ENCODE measurements at regions of chr15 and their contacts with region 1.

Region 1: DNA sequence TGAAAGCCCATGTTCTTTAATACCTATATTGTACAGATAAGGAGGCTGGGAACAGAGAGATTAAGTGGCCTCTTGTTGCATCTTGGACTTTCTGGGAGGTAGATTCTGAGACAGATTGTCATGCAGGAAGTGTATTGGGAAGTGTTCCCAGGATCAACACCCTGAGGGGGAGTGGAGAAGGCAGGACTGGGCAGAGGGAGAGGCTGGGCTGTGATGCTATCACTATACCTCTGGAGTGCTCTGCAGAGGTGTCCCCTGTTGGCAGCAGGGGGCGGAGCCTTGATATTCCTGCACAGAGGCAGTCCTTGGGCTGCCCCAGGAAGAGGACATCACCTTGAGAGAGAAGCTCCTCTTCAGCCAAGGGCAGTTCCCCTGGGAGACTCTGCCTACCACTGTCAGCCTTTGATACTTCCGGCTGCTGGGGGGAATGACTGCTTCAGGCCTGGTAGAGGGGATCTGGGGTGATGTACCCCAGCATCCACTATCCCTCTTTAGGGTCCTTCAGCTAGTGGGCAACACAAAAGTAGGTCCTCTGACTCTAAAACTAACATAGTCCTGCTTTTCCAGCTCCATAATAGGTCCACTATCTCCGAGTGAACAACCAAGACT is 97.4 kb upstream of the RNU6-1 start:
- DNase-seq: no peak

Region 2: GRCh38 chr15:67228286-67228685 is 709.0 kb before region 1 on chr15:
- in situ Hi-C with region 1: no loop called
- DNase-seq: peak; percentile 65

Region 3: GRCh38 chr15:67472957-67473356 is 464.3 kb before region 1 on chr15:
- in situ Hi-C with region 1: no loop called
- DNase-seq: no peak

Region 4: DNA sequence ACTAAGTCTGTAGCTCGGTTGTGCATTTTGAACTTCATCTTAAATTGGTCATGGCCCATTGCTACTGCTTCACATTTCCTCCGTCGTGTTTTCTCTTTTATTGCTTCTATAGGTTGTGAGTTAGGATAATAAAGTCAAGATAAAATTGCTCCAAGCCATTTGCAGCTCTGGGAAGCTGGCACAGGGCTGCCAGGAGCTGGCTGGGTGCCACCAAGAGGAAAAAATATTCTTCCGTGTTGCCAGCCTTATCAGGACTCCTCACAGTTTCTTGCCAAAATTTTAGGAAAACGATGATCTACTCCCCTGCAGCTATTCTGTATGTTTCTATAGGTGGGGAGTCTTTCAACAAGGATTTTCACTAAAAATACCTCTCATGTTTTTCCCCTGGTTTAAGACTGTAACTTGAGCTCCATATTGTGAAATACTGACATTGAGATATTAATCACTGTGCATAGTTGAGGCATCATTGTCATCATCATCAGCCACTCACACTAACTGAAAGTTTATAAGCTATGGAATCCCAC is 61.4 kb after region 1 on chr15:
- in situ Hi-C with region 1: loop called (anchors 10 kb)
- DNase-seq: no peak